ENCODE measurements at regions of chr10 and their contacts with region 1.

Region 1: DNA sequence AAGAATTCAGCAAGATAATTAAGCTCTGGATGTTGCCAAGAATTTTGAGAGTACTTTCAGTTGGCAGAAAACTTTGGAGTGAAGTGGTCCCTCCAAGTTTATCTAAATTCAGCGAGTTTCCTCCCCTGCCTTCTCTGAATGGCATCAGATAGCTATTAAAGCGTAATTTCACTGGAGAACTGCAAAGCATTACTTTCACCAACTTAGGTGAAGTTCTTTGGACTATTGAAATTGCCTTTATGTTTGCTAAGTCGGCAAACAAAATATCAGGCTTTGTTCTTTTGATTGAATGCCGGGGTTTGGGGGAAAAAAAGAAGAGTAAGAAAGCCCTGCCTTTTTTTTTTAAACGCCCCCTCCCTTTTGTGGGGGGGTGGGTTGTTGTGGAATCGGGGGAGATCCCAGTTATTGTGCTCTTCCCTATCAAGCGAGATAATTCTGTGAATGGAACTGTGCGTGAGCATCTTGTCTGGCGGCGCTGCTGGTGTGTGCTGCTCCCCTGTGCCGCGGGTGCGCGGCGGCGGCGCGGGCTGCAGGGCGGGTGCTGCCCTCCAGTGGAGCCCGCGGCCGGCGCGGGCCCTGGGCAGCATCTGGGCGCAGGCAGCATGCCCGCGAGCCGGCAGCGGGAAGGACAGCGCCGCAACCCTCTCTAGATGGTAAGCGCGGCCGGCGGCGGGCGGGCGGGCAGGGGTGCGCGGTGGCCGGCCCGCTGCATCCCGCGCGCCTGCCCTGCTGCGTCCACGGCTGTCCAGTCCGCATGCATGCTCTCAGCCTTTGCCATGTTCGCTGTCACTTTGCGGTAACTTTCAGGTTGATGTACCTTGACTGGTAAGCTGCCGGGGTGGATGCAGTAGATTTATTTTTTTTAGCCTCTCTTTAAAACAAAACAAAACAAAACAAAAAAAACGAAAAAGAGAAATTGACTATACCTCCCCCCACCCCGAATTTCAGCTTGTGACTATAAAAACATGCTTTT is 176.5 kb downstream of the TCF7L2 start:
- DNase-seq: peak; percentile 76
- ATAC-seq: peak; percentile 99
- H3K4me3 ChIP-seq: peak overlapping the region; percentile 24; the same call in 1 of the 2 replicates
- H3K27ac ChIP-seq: no peak overlapping the region
- H3K4me1 ChIP-seq: peaks cover 2% of the 10 kb centered on the region; the same call in 1 of the 2 replicates
- H3K27me3 ChIP-seq: no peaks in the 10 kb centered on the region
- CTCF ChIP-seq: peak; percentile 95
- POLR2A ChIP-seq: 0 out of 2 replicates have a peak, but pooled peaks have one; percentile 32
- RAD21 ChIP-seq: peak; percentile 96

Region 2: DNA sequence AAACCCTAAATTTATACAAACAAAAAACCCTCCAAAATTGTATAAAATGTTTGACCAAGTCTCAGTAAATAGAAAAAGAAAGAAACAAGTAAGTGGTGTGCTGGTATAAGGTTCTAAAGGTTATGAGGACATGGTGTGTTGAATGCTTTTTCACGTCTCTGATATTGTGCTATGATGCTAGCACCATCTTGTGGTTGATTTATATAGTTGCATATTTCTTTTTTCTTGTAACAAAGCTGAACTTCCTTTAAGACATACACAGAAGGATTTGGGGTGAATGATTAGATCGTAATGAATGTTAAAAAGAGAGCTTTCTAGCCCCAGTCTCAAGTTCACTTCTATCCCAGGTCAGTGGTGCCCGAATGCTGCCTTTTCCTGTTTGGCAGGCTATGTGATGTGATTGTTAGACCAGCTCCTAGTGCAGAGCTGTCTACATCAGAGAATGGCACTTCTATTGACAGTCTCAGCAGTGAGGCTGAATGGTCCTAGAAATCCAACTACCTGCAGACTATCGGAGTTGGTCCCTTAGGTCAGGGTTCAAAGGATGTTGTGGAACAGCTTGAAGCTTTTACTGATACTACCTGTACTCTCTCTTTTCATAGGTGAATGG is 654.5 kb before region 1 on chr10:
- CTCF ChIA-PET with region 1: interaction called, 3 read pairs
- POLR2A ChIA-PET with region 1: no interaction called
- dilution Hi-C with region 1: no loop called
- in situ Hi-C with region 1: no loop called
- intact Hi-C with region 1: loop called (anchors 5 kb)
- DNase-seq: peak; percentile 68
- ATAC-seq: peak; percentile 76
- H3K4me3 ChIP-seq: no peak overlapping the region
- H3K27ac ChIP-seq: no peak overlapping the region
- H3K4me1 ChIP-seq: no peaks in the 10 kb centered on the region
- H3K27me3 ChIP-seq: no peaks in the 10 kb centered on the region
- CTCF ChIP-seq: peak; percentile 69
- POLR2A ChIP-seq: no peak
- RAD21 ChIP-seq: peak; percentile 77

Region 3: DNA sequence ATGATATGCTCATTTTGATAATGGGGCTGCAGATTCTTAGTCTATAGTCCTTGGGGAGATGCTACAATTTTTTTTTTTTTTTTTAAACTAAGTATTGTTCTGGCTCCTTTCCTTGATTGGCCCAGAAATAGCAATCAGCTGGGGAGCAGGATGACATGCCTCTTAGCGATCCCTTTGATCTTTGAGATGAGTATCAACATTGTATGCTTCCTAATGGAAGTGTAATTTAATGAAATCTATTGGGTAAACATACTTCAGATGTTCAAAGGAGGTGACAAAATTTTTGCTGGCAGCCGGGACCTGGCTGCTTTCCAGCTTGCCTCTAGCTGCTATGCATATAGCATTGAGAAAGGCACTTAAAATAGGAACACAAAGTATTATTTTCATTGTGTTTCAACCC is 636.0 kb before region 1 on chr10:
- CTCF ChIA-PET with region 1: no interaction called
- POLR2A ChIA-PET with region 1: no interaction called
- dilution Hi-C with region 1: no loop called
- in situ Hi-C with region 1: no loop called
- intact Hi-C with region 1: no loop called
- DNase-seq: peak; percentile 2
- ATAC-seq: peak; percentile 11; the same call in 1 of the 2 replicates
- H3K4me3 ChIP-seq: no peak overlapping the region
- H3K27ac ChIP-seq: no peak overlapping the region
- H3K4me1 ChIP-seq: no peaks in the 10 kb centered on the region
- H3K27me3 ChIP-seq: no peaks in the 10 kb centered on the region
- CTCF ChIP-seq: no peak
- POLR2A ChIP-seq: no peak
- RAD21 ChIP-seq: no peak

Region 4: GRCh38 chr10:112565434-112566053 is 561.0 kb before region 1 on chr10:
- CTCF ChIA-PET with region 1: no interaction called
- POLR2A ChIA-PET with region 1: no interaction called
- dilution Hi-C with region 1: no loop called
- in situ Hi-C with region 1: loop called (anchors 25 kb)
- intact Hi-C with region 1: loop called (anchors 2 kb)
- DNase-seq: peak; percentile 72
- ATAC-seq: peak; percentile 82
- H3K4me3 ChIP-seq: no peak overlapping the region
- H3K27ac ChIP-seq: no peak overlapping the region
- H3K4me1 ChIP-seq: peaks cover 1% of the 10 kb centered on the region; the same call in 1 of the 2 replicates
- H3K27me3 ChIP-seq: no peaks in the 10 kb centered on the region
- CTCF ChIP-seq: peak; percentile 80
- POLR2A ChIP-seq: no peak
- RAD21 ChIP-seq: peak; percentile 85

Region 5: DNA sequence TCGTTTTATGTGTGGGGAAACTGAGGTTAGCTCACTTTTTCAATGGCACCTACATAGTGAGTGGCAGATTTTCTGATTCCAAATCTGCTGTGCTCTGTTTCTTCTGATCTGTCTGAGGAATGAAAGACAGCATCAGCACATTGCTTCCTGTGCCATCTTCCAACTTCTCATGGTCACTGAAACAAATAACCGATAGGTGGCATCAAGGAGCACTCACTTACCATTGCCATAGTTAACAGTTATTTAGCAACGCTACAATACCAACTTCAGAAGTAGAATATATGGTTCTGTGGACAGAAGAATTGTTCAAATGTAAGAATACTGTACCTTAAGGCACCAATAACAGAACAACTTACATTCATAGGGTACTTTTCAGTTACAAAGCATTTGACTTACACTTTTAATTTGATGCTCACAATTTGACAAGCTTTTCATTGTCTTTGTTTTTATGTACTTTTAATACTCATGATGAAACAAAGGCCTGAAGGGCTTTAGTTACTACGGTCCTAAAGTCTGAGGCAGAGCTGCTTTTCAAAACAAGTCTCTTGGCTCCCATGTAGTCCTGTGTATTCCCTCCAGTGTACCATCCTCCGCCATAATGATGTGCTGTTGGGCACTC is 405.3 kb before region 1 on chr10:
- CTCF ChIA-PET with region 1: interaction called, 5 read pairs
- POLR2A ChIA-PET with region 1: interaction called, 8 read pairs
- dilution Hi-C with region 1: no loop called
- in situ Hi-C with region 1: no loop called
- intact Hi-C with region 1: loop called (anchors 2 kb)
- DNase-seq: peak; percentile 53
- ATAC-seq: peak; percentile 65; the same call in 1 of the 2 replicates
- H3K4me3 ChIP-seq: no peak overlapping the region
- H3K27ac ChIP-seq: no peak overlapping the region
- H3K4me1 ChIP-seq: peaks cover 6% of the 10 kb centered on the region
- H3K27me3 ChIP-seq: no peaks in the 10 kb centered on the region
- CTCF ChIP-seq: peak; percentile 55
- POLR2A ChIP-seq: no peak
- RAD21 ChIP-seq: peak; percentile 59

Region 6: GRCh38 chr10:112811740-112812551 is 314.6 kb before region 1 on chr10:
- CTCF ChIA-PET with region 1: no interaction called
- POLR2A ChIA-PET with region 1: no interaction called
- dilution Hi-C with region 1: no loop called
- in situ Hi-C with region 1: no loop called
- intact Hi-C with region 1: loop called (anchors 10 kb)
- DNase-seq: peak; percentile 94
- ATAC-seq: peak; percentile 85
- H3K4me3 ChIP-seq: peak overlapping the region; percentile 40
- H3K27ac ChIP-seq: peak overlapping the region; percentile 84
- H3K4me1 ChIP-seq: peaks cover 20% of the 10 kb centered on the region
- H3K27me3 ChIP-seq: no peaks in the 10 kb centered on the region
- CTCF ChIP-seq: no peak
- POLR2A ChIP-seq: no peak
- RAD21 ChIP-seq: no peak

Region 7: GRCh38 chr10:113000876-113001598 is 125.5 kb before region 1 on chr10:
- CTCF ChIA-PET with region 1: no interaction called
- POLR2A ChIA-PET with region 1: no interaction called
- dilution Hi-C with region 1: no loop called
- in situ Hi-C with region 1: no loop called
- intact Hi-C with region 1: no loop called
- DNase-seq: no peak
- ATAC-seq: peak; percentile 31
- H3K4me3 ChIP-seq: no peak overlapping the region
- H3K27ac ChIP-seq: no peak overlapping the region
- H3K4me1 ChIP-seq: peaks cover 3% of the 10 kb centered on the region
- H3K27me3 ChIP-seq: no peaks in the 10 kb centered on the region
- CTCF ChIP-seq: no peak
- POLR2A ChIP-seq: no peak
- RAD21 ChIP-seq: no peak

Region 8: DNA sequence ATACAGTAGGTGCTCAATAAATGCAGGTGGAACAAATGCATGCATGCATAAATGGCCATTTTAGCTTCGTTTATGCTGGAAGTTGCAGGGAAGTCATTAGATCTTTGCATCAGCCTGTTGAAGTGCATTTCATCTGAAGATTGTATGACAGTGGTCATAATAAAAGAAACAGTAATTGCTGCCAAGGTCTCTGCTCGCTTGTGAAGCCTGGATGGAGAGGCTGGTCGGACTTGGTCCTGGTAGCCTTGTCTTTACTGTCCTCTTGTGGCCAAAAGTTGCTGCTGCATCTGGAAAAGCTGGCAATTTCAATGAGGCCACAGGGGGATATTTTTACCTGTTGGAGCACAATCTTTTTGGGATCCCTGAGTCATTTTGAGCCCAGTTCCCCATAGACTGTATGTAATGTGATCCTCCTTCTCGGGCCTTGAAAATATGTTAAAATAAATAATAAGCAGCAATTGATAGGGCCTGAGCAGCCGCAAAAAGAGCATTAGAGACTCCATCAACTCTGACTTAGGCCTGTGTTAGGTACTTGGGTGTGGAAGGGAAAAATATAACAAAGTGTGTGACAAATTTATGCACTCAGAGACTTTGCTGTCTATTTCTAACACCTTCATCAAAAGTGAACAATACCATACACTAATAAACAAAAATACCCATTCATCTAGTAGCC is 394.7 kb after region 1 on chr10:
- CTCF ChIA-PET with region 1: no interaction called
- POLR2A ChIA-PET with region 1: no interaction called
- dilution Hi-C with region 1: no loop called
- in situ Hi-C with region 1: no loop called
- intact Hi-C with region 1: loop called (anchors 10 kb)
- DNase-seq: peak; percentile 70
- ATAC-seq: peak; percentile 96
- H3K4me3 ChIP-seq: no peak overlapping the region
- H3K27ac ChIP-seq: no peak overlapping the region
- H3K4me1 ChIP-seq: no peaks in the 10 kb centered on the region
- H3K27me3 ChIP-seq: 0 out of 2 replicates have a peak, but pooled peaks cover 2% of the 10 kb centered on the region
- CTCF ChIP-seq: peak; percentile 95
- POLR2A ChIP-seq: no peak
- RAD21 ChIP-seq: peak; percentile 89

Measured in IMR-90 (cell line).